HEK293 (cell line): ENCODE measurements at regions of chr17 and their contacts with region 1.

Region 1: GRCh38 chr17:45135192-45135977 is at the start of gene ACBD4:
- H3K4me3 ChIP-seq: peak within 1 kb of the TSS; percentile 67
- H3K27ac ChIP-seq: peak within 1 kb of the TSS; percentile 4; the same call in 1 of the 2 replicates
- H3K4me1 ChIP-seq: peaks cover 7% of the 10 kb centered on the region; the same call in 1 of the 2 replicates
- CTCF ChIP-seq: peak; percentile 100

Region 2: GRCh38 chr17:44794851-44795413 is 340.5 kb before region 1 on chr17:
- CTCF ChIA-PET with region 1: no interaction called
- POLR2A ChIA-PET with region 1: no interaction called
- H3K4me3 ChIP-seq: no peak overlapping the region
- H3K27ac ChIP-seq: no peak overlapping the region
- H3K4me1 ChIP-seq: no peaks in the 10 kb centered on the region
- CTCF ChIP-seq: no peak

Region 3: GRCh38 chr17:44919885-44920564 is 215.4 kb before region 1 on chr17:
- CTCF ChIA-PET with region 1: interaction called, 24 read pairs
- POLR2A ChIA-PET with region 1: no interaction called
- H3K4me3 ChIP-seq: no peak overlapping the region
- H3K27ac ChIP-seq: no peak overlapping the region
- H3K4me1 ChIP-seq: no peaks in the 10 kb centered on the region; the same call in 1 of the 2 replicates
- CTCF ChIP-seq: peak; percentile 87

Region 4: GRCh38 chr17:45115871-45116724 is 19.3 kb before region 1 on chr17:
- CTCF ChIA-PET with region 1: interaction called, 28 read pairs
- POLR2A ChIA-PET with region 1: no interaction called
- H3K4me3 ChIP-seq: no peak overlapping the region
- H3K27ac ChIP-seq: no peak overlapping the region
- H3K4me1 ChIP-seq: no peaks in the 10 kb centered on the region
- CTCF ChIP-seq: no peak

Region 5: DNA sequence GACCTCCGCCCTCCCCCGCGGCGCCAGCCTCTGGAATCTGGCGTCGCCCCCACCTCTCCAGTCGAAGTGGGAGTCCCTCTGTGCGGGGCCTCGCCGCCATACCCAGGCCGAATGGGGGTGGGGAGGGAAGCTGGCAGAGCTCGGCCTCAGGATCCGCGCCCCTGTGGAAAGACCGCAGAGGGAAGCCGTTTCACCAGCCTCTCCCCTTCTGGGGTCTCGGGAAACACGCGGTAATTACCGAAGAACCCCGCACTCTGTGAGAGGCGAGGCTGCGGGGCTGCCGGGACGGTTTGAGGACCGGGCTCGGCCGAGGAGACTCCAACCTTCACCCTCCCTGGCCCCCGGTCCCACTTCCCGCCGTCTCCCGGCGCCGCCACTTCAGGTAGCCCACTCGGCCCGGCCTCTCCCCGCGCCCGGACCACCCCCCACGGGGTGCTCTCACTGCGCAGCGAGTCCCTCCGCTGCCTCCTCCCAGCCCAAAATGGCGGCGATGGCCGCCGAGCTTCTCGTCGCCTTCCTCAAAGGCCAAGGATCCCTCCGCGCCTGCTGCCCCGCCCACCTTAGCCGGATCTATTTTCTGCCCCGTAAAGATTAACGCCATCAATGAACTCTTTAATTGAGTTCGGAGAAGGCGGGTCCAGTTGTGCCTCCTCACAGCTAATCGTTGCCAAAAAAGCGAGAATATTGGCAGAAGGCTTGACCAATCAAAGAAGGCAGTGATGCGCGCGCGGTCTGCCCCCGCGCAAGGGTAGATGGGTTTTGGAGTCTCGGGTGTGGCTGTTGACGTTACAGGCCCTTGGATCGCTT is 25.8 kb after region 1 on chr17:
- CTCF ChIA-PET with region 1: interaction called, 209 read pairs
- POLR2A ChIA-PET with region 1: interaction called, 21 read pairs
- H3K4me3 ChIP-seq: peak overlapping the region; percentile 97
- H3K27ac ChIP-seq: peak overlapping the region; percentile 92
- H3K4me1 ChIP-seq: peaks cover 15% of the 10 kb centered on the region
- CTCF ChIP-seq: no peak

Region 6: DNA sequence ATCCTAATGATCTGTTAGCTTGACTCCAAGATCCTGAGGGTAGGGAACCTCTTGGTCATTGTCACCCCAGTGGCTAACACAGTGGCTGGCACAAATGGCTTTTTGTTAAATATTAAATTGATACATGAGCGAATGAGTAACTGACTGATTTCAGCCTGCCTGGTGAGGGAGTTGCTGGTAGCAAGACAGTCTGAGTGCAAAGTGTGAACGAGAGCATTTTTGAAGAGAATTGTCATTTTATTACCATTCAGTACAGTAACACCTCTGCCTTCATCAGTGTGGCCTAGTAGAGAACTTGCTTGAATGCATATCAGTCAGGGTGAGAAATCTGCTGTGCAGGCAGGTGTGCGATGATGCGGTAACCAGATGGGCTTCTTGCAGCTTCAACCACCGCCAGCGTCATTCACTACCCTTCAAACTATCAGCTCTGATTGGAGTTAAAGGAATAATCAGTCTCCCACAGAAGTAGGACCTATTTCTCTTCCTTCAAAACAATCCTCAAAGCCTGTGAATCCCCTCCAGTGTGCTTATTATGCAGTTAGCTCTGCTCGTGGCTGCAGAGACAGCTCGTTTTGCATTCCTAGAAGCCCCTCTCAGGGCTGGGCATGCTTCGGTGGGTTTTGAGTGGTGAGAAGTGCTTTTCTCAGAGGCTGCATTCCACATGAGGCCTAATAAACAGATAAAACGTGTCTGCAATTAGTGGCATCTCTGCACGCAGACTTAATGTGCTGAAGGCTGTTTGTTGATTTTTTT is 55.3 kb after region 1 on chr17:
- CTCF ChIA-PET with region 1: interaction called, 301 read pairs
- POLR2A ChIA-PET with region 1: no interaction called
- H3K4me3 ChIP-seq: no peak overlapping the region
- H3K27ac ChIP-seq: no peak overlapping the region
- H3K4me1 ChIP-seq: no peaks in the 10 kb centered on the region
- CTCF ChIP-seq: no peak

Region 7: DNA sequence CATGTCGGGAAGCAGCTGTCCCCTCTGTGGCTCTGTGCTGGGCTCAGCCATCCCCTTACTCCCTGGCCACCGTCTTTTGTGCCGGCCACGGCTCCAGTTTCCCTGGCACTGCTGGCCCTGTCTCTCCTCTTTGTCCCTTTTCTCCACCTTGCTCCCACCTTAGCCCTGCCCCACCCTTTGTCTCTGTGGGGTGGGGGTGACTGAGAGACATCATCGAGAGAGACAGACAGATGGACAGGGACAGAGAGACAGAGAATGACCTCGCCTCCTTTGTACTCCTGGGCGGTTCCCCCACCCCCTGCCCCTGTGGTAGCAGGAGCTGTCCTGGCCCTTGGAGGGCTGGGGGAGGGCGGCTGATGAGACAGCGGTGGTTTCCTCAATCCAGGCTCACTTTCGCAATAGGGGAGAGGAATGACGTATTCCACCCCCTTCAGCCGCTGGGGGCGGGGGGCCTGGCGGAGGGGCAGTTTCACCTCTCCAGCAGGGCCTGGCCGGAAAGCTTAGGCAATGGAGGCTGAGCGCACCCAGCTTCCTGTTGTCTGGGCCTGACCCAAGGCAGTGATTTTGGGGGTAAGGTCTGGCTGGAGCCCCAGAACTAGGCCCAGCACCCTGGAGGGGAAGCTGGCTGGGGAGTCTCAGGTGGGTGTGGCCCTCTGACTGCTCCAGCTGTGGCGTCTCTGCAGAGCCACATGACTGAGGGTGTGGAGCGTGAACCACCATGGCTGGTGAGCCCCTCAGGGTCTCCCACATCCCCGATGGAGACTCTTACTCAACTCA is 93.6 kb after region 1 on chr17:
- CTCF ChIA-PET with region 1: interaction called, 32 read pairs
- POLR2A ChIA-PET with region 1: no interaction called
- H3K4me3 ChIP-seq: no peak overlapping the region
- H3K27ac ChIP-seq: no peak overlapping the region
- H3K4me1 ChIP-seq: no peaks in the 10 kb centered on the region; the same call in 1 of the 2 replicates
- CTCF ChIP-seq: no peak

Region 8: DNA sequence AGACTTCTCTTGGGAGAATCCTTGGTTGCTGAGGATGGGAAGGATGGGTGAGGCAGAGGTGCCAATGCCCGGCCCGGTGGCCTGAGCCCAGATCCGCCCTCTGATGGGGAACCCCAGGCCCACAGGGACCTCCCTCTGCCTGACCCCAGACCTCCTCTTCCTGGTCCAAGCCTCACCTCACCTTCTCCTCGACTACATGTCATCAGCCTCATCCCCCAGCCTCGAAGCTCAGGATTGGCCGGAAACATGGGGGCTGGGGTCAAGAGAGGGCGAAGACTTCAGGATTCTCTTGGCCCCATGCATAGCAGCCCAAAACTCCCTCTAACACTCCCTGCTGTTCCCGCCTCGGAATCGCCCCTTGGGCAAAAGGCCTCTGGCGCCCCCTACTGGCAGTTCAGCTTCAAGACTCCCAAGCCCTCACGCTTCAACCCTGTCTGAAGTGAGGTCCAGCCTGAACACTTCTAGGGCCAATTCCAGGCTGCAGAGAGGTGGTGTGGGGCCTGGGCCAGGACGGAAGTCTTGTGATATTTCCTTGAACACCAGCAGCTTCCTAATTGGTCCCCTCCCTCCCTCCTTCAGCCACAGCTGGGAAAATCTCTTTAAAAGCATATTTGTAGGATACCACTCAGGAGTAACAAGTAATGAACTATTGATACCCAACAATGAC is 250.1 kb after region 1 on chr17:
- CTCF ChIA-PET with region 1: interaction called, 13 read pairs
- POLR2A ChIA-PET with region 1: no interaction called
- H3K4me3 ChIP-seq: no peak overlapping the region
- H3K27ac ChIP-seq: no peak overlapping the region
- H3K4me1 ChIP-seq: no peaks in the 10 kb centered on the region
- CTCF ChIP-seq: peak; percentile 92